Natural killer cell (primary cell): ENCODE measurements at regions of chr10 and their contacts with region 1.

Region 1: GRCh38 chr10:99845837-99846382 is 63.5 kb downstream of the ABCC2 start:
- DNase-seq: peak; percentile 49 to 91
- ATAC-seq: peak; percentile 85 to 96 (median 89)
- H3K4me3 ChIP-seq: no peak overlapping the region
- H3K4me3 Mint-ChIP-seq: peak overlapping the region; percentile 53
- H3K27ac ChIP-seq: no peak overlapping the region
- H3K27ac Mint-ChIP-seq: no peak overlapping the region
- H3K4me1 ChIP-seq: peaks cover 10% of the 10 kb centered on the region
- H3K4me1 Mint-ChIP-seq: peaks cover 10 to 11% of the 10 kb centered on the region in 2 donors
- H3K27me3 ChIP-seq: peaks cover 3% of the 10 kb centered on the region
- H3K27me3 Mint-ChIP-seq: peaks cover 0 to 2% of the 10 kb centered on the region in 2 donors
- CTCF ChIP-seq: peak; percentile 95

Region 2: DNA sequence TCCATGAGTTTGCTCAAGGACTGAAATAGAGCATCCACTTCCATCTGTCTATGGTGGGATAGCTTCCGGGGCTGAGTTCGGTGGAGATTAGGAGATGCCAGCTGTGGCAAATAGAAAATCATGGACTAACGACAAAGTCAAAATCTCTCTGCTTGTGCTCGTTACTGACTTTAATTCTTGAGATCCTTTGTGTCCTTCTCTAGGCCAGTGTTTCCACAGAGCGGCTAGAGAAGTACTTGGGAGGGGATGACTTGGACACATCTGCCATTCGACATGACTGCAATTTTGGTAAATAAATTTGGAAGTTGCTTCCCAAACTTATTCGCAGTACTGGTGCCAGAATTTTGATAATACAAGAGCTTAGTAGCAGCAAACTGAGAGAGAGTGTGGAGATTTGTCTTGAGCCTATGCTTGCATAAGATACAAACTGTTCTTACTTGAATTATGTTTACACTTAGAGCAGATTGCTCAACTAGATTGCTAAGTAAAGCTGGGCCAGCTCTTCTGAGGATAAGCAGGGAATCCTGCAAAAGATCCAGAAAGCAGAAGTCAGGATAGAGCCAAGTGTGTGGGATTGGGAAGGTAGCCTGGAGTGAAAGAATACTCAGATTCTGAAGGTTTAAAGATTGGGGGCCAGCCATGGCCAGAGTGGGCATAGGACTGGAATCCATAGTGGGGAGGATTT is 35.8 kb before region 1 on chr10:
- intact Hi-C with region 1: no loop called
- DNase-seq: no peak
- ATAC-seq: no peak
- H3K4me3 ChIP-seq: no peak overlapping the region
- H3K4me3 Mint-ChIP-seq: no peak overlapping the region
- H3K27ac ChIP-seq: no peak overlapping the region
- H3K27ac Mint-ChIP-seq: no peak overlapping the region
- H3K4me1 ChIP-seq: no peaks in the 10 kb centered on the region
- H3K4me1 Mint-ChIP-seq: no peaks in the 10 kb centered on the region
- H3K27me3 ChIP-seq: no peaks in the 10 kb centered on the region
- H3K27me3 Mint-ChIP-seq: peaks cover 0 to 2% of the 10 kb centered on the region in 2 donors
- CTCF ChIP-seq: no peak

Region 3: GRCh38 chr10:100009793-100010676 is 164.1 kb after region 1 on chr10 and contains the start of gene DNMBP:
- intact Hi-C with region 1: loop called (anchors 10 kb)
- DNase-seq: peak; percentile 86 to 91
- ATAC-seq: peak; percentile 96 to 98 (median 97)
- H3K4me3 ChIP-seq: peak within 1 kb of the TSS; percentile 83
- H3K4me3 Mint-ChIP-seq: peak within 1 kb of the TSS; percentile 93
- H3K27ac ChIP-seq: peak within 1 kb of the TSS; percentile 67
- H3K27ac Mint-ChIP-seq: peak within 1 kb of the TSS; percentile 41 to 89
- H3K4me1 ChIP-seq: peaks cover 11% of the 10 kb centered on the region
- H3K4me1 Mint-ChIP-seq: peaks cover 36 to 41% of the 10 kb centered on the region in 2 donors
- H3K27me3 ChIP-seq: no peaks in the 10 kb centered on the region
- H3K27me3 Mint-ChIP-seq: no peaks in the 10 kb centered on the region
- CTCF ChIP-seq: peak; percentile 59
- total RNA-seq, gene DNMBP: 13.8 to 15.4 (median 14.4) TPM

Region 4: DNA sequence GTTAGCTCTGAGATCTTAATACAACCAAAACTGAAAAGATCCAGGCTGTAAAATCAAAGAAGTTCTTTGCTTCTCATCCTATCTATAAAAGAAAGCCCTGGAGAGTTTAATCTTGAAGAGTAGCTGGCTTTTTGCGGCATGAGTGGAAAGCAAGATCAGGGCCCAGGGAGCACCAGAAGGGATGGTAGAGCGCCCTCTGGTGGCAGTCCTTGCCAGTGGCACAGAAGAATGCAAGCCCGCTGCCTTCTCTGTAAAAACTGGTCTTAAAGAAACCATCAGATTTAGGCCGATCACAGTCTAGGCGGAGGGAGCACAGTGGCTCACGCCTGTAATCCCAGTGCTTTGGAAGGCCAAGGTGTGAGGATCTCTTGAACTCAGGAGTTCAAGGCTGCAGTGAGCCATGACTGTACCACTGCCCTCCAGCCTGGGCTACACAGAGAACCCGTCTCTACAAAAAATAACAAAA is 200.1 kb after region 1 on chr10:
- intact Hi-C with region 1: loop called (anchors 1 kb)
- DNase-seq: peak; percentile 75 to 87
- ATAC-seq: peak; percentile 68 to 85 (median 82)
- H3K4me3 ChIP-seq: no peak overlapping the region
- H3K4me3 Mint-ChIP-seq: no peak overlapping the region
- H3K27ac ChIP-seq: no peak overlapping the region
- H3K27ac Mint-ChIP-seq: no peak overlapping the region
- H3K4me1 ChIP-seq: no peaks in the 10 kb centered on the region
- H3K4me1 Mint-ChIP-seq: no peaks in the 10 kb centered on the region
- H3K27me3 ChIP-seq: no peaks in the 10 kb centered on the region
- H3K27me3 Mint-ChIP-seq: peaks cover 5 to 11% of the 10 kb centered on the region in 2 donors
- CTCF ChIP-seq: peak; percentile 93